Dorsolateral prefrontal cortex (tissue), 120 donors: ENCODE measurements at regions of chr4 and their contacts with region 1.

Region 1: DNA sequence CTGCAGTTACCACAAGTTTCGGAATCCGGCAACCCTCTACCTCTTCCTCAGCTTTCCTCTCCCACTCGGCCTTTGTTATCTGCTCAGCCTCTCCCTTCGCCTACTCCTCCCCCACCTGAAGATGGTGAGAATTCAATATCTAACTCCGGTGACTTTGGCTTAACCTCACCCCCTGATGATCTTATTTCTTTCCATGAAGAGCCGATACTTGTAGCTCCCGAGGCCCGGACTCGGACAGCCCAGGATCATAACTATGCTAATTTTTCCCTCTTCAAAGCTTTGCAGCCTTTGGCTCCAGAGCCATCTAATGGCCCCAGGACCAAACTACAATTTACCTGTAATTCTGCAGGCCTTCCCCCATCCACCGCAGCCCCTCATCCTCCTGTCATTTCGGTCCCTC is 32.0 kb upstream of the MGST2 start:
- DNase-seq: peak in 3 of 10 donors; percentile 43 to 55 (median 47)
- H3K4me3 ChIP-seq: peak overlapping the region in 53 of 59 donors; percentile 1 to 60 (median 37)
- H3K27ac ChIP-seq: no peak overlapping the region
- H3K27me3 ChIP-seq: no peaks in the 10 kb centered on the region
- CTCF ChIP-seq: peak in 53 of 56 donors; percentile 14 to 78 (median 55)

Region 2: DNA sequence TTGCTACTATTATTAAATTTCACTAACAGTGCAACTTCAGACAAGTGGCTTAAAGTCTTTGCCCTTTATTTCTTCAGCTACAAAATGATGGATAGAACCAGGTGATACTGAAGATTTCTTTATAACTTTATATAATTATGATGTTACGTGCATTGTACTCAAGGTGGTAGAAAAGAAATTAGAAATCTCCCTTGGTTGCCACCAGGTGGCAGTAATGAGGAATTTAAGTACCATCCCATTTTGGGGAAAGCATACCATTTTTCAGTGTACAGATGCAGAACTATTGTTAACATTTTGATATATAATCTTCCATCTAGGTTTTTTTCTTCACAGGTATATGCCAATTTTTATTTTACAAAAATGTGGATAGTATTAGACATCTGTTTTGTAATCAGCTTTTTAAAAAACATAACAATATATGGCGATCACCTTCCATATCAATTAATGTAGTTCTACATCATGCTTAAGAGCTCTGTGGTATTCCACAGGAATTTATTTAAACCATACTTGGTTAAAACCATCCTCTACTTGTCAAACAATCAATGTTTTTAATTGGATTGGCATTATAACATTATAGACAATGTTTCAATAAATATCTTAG is 217.5 kb before region 1 on chr4:
- intact Hi-C with region 1: loop called in 1 of 2 experiments (anchors 10 kb)
- DNase-seq: peak in 1 of 10 donors; percentile 18
- H3K4me3 ChIP-seq: no peak overlapping the region
- H3K27ac ChIP-seq: no peak overlapping the region
- H3K27me3 ChIP-seq: no peaks in the 10 kb centered on the region
- CTCF ChIP-seq: peak; percentile 57 to 87 (median 76)

Region 3: DNA sequence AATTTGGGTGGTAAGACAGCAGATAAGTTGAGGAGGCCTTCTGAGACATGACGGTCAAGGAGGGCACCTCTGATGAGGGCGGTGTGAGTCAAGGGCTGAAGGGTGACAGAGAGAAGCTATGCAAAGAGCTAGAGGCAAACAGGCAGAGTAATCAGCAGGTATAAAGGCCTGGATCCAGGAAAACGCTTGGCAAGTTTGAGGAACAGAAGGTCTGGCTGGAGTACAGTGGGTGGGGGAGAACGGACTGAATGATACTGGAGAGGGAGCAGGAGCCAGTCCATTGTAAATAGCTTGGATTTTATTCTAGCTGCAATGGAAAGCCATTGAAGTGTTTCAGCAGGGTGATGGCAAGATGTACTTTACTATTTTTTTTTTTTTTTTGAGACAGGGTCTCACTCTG is 140.5 kb before region 1 on chr4:
- intact Hi-C with region 1: loop called in 1 of 2 experiments (anchors 10 kb)
- DNase-seq: peak in 1 of 10 donors; percentile 81
- H3K4me3 ChIP-seq: no peak overlapping the region
- H3K27ac ChIP-seq: peak overlapping the region in 1 of 59 donors; percentile 73
- H3K27me3 ChIP-seq: no peaks in the 10 kb centered on the region
- CTCF ChIP-seq: no peak

Region 4: DNA sequence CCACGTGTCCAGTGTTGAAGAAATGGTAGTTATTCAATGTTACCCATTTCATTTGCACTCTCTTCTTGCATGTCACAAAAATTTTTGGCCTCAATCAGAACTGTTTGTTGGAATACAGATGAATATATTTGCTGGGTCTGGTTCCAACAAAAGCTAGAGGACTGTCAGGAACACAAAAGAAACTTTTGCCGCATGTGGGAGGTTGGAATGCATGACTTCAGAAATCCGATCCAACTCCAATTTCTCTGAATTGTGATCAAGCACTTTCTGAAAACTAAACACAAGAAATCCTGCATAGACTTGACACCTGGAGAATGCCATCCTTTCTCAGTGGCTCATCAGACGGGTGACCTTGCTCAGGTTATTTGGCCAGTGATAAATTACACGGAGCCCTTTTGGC is 93.0 kb before region 1 on chr4:
- intact Hi-C with region 1: no loop called
- DNase-seq: no peak
- H3K4me3 ChIP-seq: no peak overlapping the region
- H3K27ac ChIP-seq: no peak overlapping the region
- H3K27me3 ChIP-seq: no peaks in the 10 kb centered on the region
- CTCF ChIP-seq: no peak

Region 5: GRCh38 chr4:139554893-139555704 is 78.6 kb before region 1 on chr4:
- intact Hi-C with region 1: no loop called
- DNase-seq: peak; percentile 61 to 91 (median 86)
- H3K4me3 ChIP-seq: peak overlapping the region; percentile 76 to 99 (median 92)
- H3K27ac ChIP-seq: peak overlapping the region; percentile 83 to 99 (median 96)
- H3K27me3 ChIP-seq: no peaks in the 10 kb centered on the region
- CTCF ChIP-seq: peak in 10 of 56 donors; percentile 3 to 28 (median 13)